ENCODE measurements at regions of chr1 and their contacts with region 1.

Region 1: GRCh38 chr1:27979151-27979858 is 19.5 kb downstream of the XKR8 start:
- DNase-seq: peak; percentile 82
- H3K4me3 ChIP-seq: no peak overlapping the region
- H3K27ac ChIP-seq: peak overlapping the region; percentile 36
- H3K4me1 ChIP-seq: peaks cover 3% of the 10 kb centered on the region
- H3K27me3 ChIP-seq: no peaks in the 10 kb centered on the region
- CTCF ChIP-seq: peak; percentile 22 to 31
- POLR2A ChIP-seq: no peak

Region 2: DNA sequence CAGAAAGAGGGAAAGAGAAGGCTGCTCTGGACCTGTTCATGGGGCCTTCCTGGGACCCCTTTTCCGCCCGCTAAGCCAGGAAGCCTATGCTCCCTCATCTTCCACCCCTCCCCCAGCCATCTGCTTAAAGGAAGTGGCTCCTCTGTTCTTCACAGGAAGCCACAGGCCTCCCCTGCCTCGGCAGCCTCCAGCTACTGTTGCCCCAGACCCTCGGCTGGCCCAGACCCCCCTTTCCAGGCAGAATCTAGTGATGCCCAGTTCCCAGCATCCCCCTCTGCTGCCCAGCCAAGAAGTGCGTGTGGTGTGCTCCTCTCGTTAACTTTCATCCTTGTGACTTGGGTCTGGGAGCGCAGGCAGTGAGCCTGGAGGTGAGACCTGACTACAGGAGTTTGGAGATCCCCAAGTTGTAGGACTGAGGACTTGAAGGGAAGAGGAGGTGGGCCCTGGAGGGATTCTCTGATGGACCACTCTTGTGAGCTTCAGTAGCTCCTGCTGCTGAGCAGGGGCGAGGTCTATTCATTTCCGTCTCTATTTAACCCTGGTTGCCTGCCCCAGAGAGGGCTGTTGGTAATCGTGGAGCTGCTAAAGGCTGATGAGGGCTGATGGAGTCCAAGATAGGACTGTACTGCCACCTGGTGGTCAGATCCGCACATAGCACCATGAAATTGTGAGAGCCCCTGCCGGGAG is 316.5 kb before region 1 on chr1:
- CTCF ChIA-PET with region 1: no interaction called
- POLR2A ChIA-PET with region 1: no interaction called
- dilution Hi-C with region 1: no loop called
- intact Hi-C with region 1: no loop called
- DNase-seq: peak; percentile 83
- H3K4me3 ChIP-seq: no peak overlapping the region
- H3K27ac ChIP-seq: no peak overlapping the region
- H3K4me1 ChIP-seq: peaks cover 14% of the 10 kb centered on the region
- H3K27me3 ChIP-seq: no peaks in the 10 kb centered on the region
- CTCF ChIP-seq: peak; percentile 80 to 85
- POLR2A ChIP-seq: no peak

Region 3: DNA sequence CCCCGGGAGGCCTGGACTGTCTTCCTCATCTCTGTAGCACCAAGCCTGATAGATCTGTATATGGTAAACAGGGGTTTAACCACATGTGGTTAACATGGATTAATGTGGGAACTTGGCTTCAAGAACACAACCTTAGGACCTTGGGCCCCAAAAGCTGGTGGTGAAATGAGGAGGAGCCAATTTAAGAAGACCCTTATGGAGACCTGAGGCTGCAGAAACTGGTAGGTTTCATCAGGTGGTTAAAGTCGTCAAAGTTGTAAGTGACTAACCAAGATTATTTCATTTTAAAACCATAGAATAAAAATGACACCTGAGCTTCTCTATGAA is 93.0 kb before region 1 on chr1:
- CTCF ChIA-PET with region 1: no interaction called
- POLR2A ChIA-PET with region 1: no interaction called
- dilution Hi-C with region 1: no loop called
- intact Hi-C with region 1: no loop called
- DNase-seq: no peak
- H3K4me3 ChIP-seq: no peak overlapping the region
- H3K27ac ChIP-seq: no peak overlapping the region
- H3K4me1 ChIP-seq: no peaks in the 10 kb centered on the region
- H3K27me3 ChIP-seq: no peaks in the 10 kb centered on the region
- CTCF ChIP-seq: no peak
- POLR2A ChIP-seq: no peak

Region 4: GRCh38 chr1:27940297-27940696 is 39.0 kb before region 1 on chr1:
- CTCF ChIA-PET with region 1: interaction called, 26 read pairs
- POLR2A ChIA-PET with region 1: no interaction called
- dilution Hi-C with region 1: no loop called
- intact Hi-C with region 1: loop called (anchors 1 kb)
- DNase-seq: peak; percentile 44
- H3K4me3 ChIP-seq: no peak overlapping the region
- H3K27ac ChIP-seq: no peak overlapping the region
- H3K4me1 ChIP-seq: peaks cover 7% of the 10 kb centered on the region
- H3K27me3 ChIP-seq: peaks cover 0 to 5% of the 10 kb centered on the region in 2 experiments
- CTCF ChIP-seq: peak; percentile 34 to 44
- POLR2A ChIP-seq: no peak

Region 5: DNA sequence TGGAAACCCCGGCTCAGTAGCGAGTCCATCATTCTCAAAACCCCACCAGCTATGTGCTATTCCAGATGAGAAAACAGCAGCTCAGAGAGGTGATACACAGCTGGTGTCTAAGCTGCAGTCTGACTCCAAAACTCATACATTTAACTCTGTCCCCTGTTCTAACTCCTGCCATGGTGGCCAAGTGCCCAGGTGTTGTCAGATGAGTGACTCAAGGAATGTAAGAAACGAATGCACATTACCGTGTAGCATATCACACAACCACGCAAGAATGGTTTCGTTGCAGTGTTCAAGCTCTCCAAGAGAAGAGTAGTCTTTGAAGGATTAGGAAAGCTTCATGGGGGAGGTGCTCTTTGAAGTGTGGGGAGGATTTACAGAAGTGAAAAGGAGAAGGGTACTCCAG is 24.2 kb before region 1 on chr1:
- CTCF ChIA-PET with region 1: no interaction called
- POLR2A ChIA-PET with region 1: no interaction called
- dilution Hi-C with region 1: no loop called
- intact Hi-C with region 1: no loop called
- DNase-seq: no peak
- H3K4me3 ChIP-seq: no peak overlapping the region
- H3K27ac ChIP-seq: no peak overlapping the region
- H3K4me1 ChIP-seq: peaks cover 5% of the 10 kb centered on the region
- H3K27me3 ChIP-seq: peaks cover 0 to 2% of the 10 kb centered on the region in 2 experiments
- CTCF ChIP-seq: no peak
- POLR2A ChIP-seq: no peak

Region 6: DNA sequence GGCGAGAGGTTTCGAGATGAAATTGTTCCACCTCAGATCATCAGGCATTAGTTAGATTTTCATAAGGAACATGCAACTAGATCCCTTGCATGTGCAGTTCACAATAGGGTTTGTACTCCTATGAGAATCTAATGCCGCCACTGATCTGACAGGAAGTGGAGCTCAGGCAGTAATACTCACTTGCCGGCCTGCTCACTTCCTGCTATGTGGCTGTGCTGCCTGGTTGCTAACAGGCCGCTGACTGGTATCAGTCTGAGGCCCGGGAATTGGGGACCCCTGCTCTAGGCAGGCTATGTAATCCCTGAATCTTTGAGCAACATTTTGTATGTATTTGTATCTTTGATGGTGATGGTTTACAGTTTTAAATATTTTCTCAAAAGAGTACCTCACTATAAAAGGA is 13.0 kb after region 1 on chr1:
- CTCF ChIA-PET with region 1: interaction called, 17 read pairs
- POLR2A ChIA-PET with region 1: no interaction called
- dilution Hi-C with region 1: no loop called
- intact Hi-C with region 1: no loop called
- DNase-seq: peak; percentile 60
- H3K4me3 ChIP-seq: no peak overlapping the region
- H3K27ac ChIP-seq: peak overlapping the region; percentile 46
- H3K4me1 ChIP-seq: peaks cover 35% of the 10 kb centered on the region
- H3K27me3 ChIP-seq: no peaks in the 10 kb centered on the region
- CTCF ChIP-seq: no peak
- POLR2A ChIP-seq: no peak

Region 7: GRCh38 chr1:28359592-28360239 is 380.4 kb after region 1 on chr1:
- CTCF ChIA-PET with region 1: no interaction called
- POLR2A ChIA-PET with region 1: no interaction called
- dilution Hi-C with region 1: no loop called
- intact Hi-C with region 1: no loop called
- DNase-seq: peak; percentile 73
- H3K4me3 ChIP-seq: no peak overlapping the region
- H3K27ac ChIP-seq: no peak overlapping the region
- H3K4me1 ChIP-seq: no peaks in the 10 kb centered on the region
- H3K27me3 ChIP-seq: no peaks in the 10 kb centered on the region
- CTCF ChIP-seq: peak; percentile 56 to 64
- POLR2A ChIP-seq: no peak